Activated CD4-positive, alpha-beta T cell treated with anti-CD3 and anti-CD28 coated beads for 36 hours (primary cell): ENCODE measurements at regions of chr2 and their contacts with region 1.

Region 1: DNA sequence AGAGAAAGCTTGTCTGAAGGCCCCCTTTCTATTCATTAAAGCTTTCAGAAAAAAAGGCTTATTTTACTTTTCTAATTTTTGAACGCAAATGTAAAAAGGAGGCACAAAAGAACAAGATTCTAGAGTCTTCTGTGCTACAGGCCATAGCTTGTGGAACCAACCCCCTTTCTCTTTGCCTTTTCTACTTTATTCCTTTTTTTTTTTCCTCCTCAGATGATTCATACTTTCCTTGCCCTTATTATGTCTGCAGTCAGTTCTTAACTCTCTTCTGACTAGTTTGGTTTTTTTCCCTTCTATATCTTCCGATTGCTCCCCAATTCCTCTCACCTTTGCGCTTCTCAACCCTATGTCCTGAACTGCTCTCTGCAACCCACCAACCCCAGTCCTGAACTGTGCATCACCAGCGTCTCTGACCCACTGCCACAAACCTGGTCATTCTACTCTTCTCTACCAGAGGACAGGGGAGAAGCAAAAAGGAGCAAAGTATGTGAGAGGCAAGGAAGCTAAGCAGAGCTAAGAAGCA is 56.9 kb upstream of the WIPF1 start:
- DNase-seq: no peak
- ATAC-seq: peak; percentile 39
- H3K4me3 Mint-ChIP-seq: no peak overlapping the region
- H3K27ac Mint-ChIP-seq: peak overlapping the region; percentile 6
- H3K4me1 Mint-ChIP-seq: peaks cover 33% of the 10 kb centered on the region
- H3K27me3 Mint-ChIP-seq: no peaks in the 10 kb centered on the region

Region 2: DNA sequence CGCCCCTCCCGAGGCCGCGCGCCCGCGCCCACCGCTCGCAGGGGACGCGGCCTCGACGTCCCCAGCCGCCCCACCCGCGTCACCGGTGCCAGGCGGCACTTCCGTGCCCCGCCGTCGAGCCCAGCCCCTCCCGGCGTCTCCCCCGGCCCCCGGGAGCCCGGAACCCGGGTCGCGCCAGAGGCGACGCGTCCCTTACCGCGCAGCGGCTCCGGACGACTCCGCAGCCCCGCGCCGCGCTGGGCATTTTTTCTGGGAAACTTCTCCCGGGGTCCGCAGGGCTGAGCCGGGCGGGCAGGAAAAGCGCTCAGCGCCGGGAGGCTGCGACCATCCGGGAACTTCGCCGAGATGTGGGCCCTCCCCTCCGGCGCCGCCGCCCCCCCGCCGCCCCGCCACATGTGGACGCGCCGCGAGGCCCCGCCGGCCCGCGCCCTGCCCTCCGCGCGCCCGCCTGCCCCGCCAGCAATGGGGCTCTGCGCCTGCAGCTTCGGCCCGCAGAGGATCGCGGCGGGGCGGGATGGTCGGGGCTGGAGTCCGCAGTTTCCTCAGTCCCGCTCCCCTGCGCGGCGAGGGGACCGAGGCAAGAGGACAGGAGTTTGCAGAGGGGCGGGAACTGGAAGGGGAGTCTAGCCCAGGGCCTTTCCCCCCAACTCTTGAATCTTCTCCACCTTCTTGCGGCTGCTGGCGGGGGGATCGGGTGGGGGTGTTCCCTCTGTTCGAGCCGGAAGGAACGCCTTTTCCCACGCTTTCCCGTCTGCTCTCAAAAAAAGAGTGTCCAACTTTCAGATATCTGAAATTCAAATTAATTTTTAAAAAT is 28.3 kb after region 1 on chr2:
- CTCF ChIA-PET with region 1: interaction called, 3 read pairs
- POLR2A ChIA-PET with region 1: interaction called, 13 read pairs
- intact Hi-C with region 1: no loop called
- DNase-seq: peak; percentile 66
- ATAC-seq: peak; percentile 66
- H3K4me3 Mint-ChIP-seq: peak overlapping the region; percentile 82
- H3K27ac Mint-ChIP-seq: peak overlapping the region; percentile 90
- H3K4me1 Mint-ChIP-seq: peaks cover 48% of the 10 kb centered on the region
- H3K27me3 Mint-ChIP-seq: no peaks in the 10 kb centered on the region

Region 3: DNA sequence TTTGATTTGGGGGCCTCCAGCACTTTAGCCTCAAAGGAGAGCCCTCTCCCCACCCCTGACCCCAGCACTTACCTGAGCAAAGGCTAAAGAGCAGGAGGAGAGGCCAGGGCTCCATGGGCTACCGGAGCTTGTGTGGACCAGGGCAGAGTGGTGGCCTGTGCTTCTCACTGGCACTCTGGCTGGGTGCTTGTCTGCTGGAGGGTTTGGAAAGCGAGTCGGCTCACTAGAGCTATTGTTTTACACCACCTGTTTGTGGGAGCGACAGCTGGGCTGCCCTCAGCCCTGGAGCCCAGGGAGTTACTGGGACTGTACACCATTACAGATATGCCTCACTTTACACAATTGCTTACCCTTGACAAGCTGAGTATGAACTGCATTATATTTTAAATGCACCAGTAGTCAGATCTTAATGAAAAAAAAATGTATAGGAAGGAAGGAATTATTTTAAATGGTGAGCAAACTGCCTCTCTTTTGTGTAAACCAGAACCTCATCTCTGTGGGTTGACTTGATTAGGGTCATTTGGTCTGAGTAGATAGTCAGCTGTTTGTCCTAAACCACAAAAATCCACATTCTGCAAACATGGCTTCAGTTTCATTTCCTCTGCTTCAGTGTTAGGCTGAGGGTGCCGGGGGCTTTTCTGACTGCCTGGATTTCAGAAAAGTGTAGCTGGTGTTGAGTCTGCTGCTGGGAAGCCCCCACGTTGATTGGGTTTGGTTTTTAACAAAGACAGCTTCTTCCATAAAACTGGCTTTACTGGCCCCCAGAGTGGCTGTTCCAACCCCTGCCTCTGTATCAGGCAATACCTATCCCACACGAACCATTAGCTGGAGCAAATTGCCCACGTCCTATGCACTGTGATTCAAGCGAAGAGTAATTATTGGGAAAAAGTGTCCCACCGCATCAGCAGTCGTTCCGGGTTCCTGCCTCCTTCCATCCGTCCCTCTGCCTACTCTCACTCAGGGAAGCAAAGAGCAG is 110.1 kb after region 1 on chr2 and contains the start of gene CHRNA1:
- CTCF ChIA-PET with region 1: no interaction called
- POLR2A ChIA-PET with region 1: no interaction called
- intact Hi-C with region 1: no loop called
- DNase-seq: no peak
- ATAC-seq: no peak
- H3K4me3 Mint-ChIP-seq: no peak within 1 kb of the TSS
- H3K27ac Mint-ChIP-seq: no peak within 1 kb of the TSS
- H3K4me1 Mint-ChIP-seq: peaks cover 5% of the 10 kb centered on the region
- H3K27me3 Mint-ChIP-seq: no peaks in the 10 kb centered on the region
- total RNA-seq, gene CHRNA1: not detected